Natural killer cell (primary cell): ENCODE measurements at regions of chr5 and their contacts with region 1.

Region 1: GRCh38 chr5:14809369-14810155 is 62.0 kb downstream of the ANKH start:
- DNase-seq: peak; percentile 56 to 82
- ATAC-seq: peak; percentile 85 to 92 (median 90)
- H3K4me3 ChIP-seq: peak overlapping the region; percentile 21
- H3K4me3 Mint-ChIP-seq: peak overlapping the region; percentile 87
- H3K27ac ChIP-seq: peak overlapping the region; percentile 65
- H3K27ac Mint-ChIP-seq: peak overlapping the region; percentile 90 to 94
- H3K4me1 ChIP-seq: peaks cover 39% of the 10 kb centered on the region
- H3K4me1 Mint-ChIP-seq: peaks cover 64 to 67% of the 10 kb centered on the region in 2 donors
- H3K27me3 ChIP-seq: no peaks in the 10 kb centered on the region
- H3K27me3 Mint-ChIP-seq: no peaks in the 10 kb centered on the region
- CTCF ChIP-seq: no peak

Region 2: GRCh38 chr5:14399054-14399692 is 410.4 kb before region 1 on chr5:
- intact Hi-C with region 1: no loop called
- DNase-seq: peak in 1 of 2 donors; percentile 75
- ATAC-seq: peak in 2 of 3 donors; percentile 31 to 50
- H3K4me3 ChIP-seq: no peak overlapping the region
- H3K4me3 Mint-ChIP-seq: no peak overlapping the region
- H3K27ac ChIP-seq: no peak overlapping the region
- H3K27ac Mint-ChIP-seq: no peak overlapping the region
- H3K4me1 ChIP-seq: no peaks in the 10 kb centered on the region
- H3K4me1 Mint-ChIP-seq: peaks cover 3 to 14% of the 10 kb centered on the region in 2 donors
- H3K27me3 ChIP-seq: no peaks in the 10 kb centered on the region
- H3K27me3 Mint-ChIP-seq: no peaks in the 10 kb centered on the region
- CTCF ChIP-seq: peak; percentile 60

Region 3: GRCh38 chr5:14447958-14448911 is 361.3 kb before region 1 on chr5:
- intact Hi-C with region 1: no loop called
- DNase-seq: no peak
- ATAC-seq: no peak
- H3K4me3 ChIP-seq: no peak overlapping the region
- H3K4me3 Mint-ChIP-seq: no peak overlapping the region
- H3K27ac ChIP-seq: no peak overlapping the region
- H3K27ac Mint-ChIP-seq: no peak overlapping the region
- H3K4me1 ChIP-seq: no peaks in the 10 kb centered on the region
- H3K4me1 Mint-ChIP-seq: no peaks in the 10 kb centered on the region
- H3K27me3 ChIP-seq: no peaks in the 10 kb centered on the region
- H3K27me3 Mint-ChIP-seq: no peaks in the 10 kb centered on the region
- CTCF ChIP-seq: no peak

Region 4: DNA sequence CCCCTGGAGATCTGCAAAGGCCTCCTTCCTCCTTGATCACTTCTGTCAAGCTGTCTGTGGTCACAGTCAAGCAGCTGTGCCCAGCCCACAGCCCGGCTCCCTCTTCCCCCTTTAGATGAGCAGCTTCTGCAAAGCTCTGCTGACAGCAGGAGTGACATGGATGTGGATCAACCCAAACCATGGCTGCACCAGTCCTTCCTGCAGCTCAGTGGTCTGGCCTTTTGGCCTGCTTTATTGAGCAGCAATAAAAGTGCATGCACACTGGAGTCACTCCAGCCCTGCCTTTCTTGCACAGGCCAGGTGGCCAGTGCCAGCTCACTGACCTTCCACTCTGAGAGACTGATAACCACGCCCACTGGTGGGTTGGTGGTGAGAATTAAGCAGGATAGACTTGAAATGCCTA is 319.3 kb before region 1 on chr5:
- intact Hi-C with region 1: no loop called
- DNase-seq: no peak
- ATAC-seq: no peak
- H3K4me3 ChIP-seq: no peak overlapping the region
- H3K4me3 Mint-ChIP-seq: no peak overlapping the region
- H3K27ac ChIP-seq: no peak overlapping the region
- H3K27ac Mint-ChIP-seq: no peak overlapping the region
- H3K4me1 ChIP-seq: peaks cover 9% of the 10 kb centered on the region
- H3K4me1 Mint-ChIP-seq: peaks cover 0 to 5% of the 10 kb centered on the region in 2 donors
- H3K27me3 ChIP-seq: no peaks in the 10 kb centered on the region
- H3K27me3 Mint-ChIP-seq: no peaks in the 10 kb centered on the region
- CTCF ChIP-seq: no peak

Region 5: GRCh38 chr5:14581333-14581890 is 228.2 kb before region 1 on chr5 and contains the start of gene OTULINL:
- intact Hi-C with region 1: loop called (anchors 5 kb)
- DNase-seq: peak; percentile 83 to 91
- ATAC-seq: peak; percentile 82 to 91 (median 82)
- H3K4me3 ChIP-seq: peak within 1 kb of the TSS; percentile 68
- H3K4me3 Mint-ChIP-seq: peak within 1 kb of the TSS; percentile 83
- H3K27ac ChIP-seq: peak within 1 kb of the TSS; percentile 89
- H3K27ac Mint-ChIP-seq: peak within 1 kb of the TSS; percentile 81 to 86
- H3K4me1 ChIP-seq: peaks cover 25% of the 10 kb centered on the region
- H3K4me1 Mint-ChIP-seq: peaks cover 29 to 44% of the 10 kb centered on the region in 2 donors
- H3K27me3 ChIP-seq: no peaks in the 10 kb centered on the region
- H3K27me3 Mint-ChIP-seq: peaks cover 0 to 16% of the 10 kb centered on the region in 2 donors
- CTCF ChIP-seq: no peak
- total RNA-seq, gene OTULINL: 33.0 to 67.4 (median 51.8) TPM

Region 6: DNA sequence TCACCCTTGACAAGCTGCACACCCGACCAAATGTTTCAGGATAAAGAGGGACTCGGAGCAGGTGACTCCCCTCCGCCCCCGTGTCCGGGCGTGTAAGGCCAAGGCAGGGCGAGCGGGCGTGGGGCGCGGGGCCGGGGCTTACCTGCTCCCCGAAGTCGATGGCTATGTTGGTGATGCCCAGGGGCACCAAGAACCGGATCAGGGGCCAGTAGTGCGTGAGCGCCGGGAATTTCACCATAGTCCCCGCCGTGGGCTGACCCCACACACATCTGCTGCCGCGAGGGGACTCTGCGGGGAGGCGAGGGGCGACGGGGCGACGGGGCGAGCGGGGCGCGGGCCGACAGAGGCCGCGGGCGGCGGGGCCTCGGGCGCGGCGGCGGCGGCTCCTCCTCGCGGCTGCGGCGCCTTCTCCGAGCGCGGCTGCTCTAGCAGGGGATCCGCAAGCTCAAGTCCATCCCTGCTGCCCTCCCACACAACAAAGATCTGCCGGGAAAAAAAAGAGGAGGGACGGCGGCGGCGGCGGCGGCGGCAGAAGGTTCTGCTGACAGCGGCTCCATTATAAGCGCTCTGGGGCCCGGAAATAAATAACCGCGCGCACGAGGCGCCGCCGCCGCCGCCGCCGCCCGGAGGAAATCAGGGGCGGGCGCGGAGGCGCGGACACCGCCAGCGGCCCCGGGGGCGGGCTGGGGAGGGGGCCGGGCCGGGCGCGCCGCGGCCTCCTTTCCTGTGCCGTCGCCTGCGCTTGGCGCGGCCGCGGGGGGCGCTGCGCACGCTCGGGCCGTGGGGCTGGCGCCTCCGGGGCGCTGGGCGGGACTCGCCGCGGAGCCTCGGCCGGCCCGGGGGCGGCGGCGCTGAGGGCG is 61.9 kb after region 1 on chr5 and contains the start of gene ANKH:
- intact Hi-C with region 1: loop called (anchors 1 kb)
- DNase-seq: peak; percentile 79 to 93
- ATAC-seq: peak; percentile 86 to 97 (median 91)
- H3K4me3 ChIP-seq: peak within 1 kb of the TSS; percentile 66
- H3K4me3 Mint-ChIP-seq: peak within 1 kb of the TSS; percentile 97
- H3K27ac ChIP-seq: peak within 1 kb of the TSS; percentile 74
- H3K27ac Mint-ChIP-seq: peak within 1 kb of the TSS; percentile 85 to 94
- H3K4me1 ChIP-seq: peaks cover 22% of the 10 kb centered on the region
- H3K4me1 Mint-ChIP-seq: peaks cover 26 to 29% of the 10 kb centered on the region in 2 donors
- H3K27me3 ChIP-seq: peaks cover 3% of the 10 kb centered on the region
- H3K27me3 Mint-ChIP-seq: peaks cover 6 to 7% of the 10 kb centered on the region in 2 donors
- CTCF ChIP-seq: no peak
- total RNA-seq, gene ANKH: 52.9 to 78.0 (median 63.8) TPM